ENCODE measurements at regions of chrX and their contacts with region 1.

Region 1: DNA sequence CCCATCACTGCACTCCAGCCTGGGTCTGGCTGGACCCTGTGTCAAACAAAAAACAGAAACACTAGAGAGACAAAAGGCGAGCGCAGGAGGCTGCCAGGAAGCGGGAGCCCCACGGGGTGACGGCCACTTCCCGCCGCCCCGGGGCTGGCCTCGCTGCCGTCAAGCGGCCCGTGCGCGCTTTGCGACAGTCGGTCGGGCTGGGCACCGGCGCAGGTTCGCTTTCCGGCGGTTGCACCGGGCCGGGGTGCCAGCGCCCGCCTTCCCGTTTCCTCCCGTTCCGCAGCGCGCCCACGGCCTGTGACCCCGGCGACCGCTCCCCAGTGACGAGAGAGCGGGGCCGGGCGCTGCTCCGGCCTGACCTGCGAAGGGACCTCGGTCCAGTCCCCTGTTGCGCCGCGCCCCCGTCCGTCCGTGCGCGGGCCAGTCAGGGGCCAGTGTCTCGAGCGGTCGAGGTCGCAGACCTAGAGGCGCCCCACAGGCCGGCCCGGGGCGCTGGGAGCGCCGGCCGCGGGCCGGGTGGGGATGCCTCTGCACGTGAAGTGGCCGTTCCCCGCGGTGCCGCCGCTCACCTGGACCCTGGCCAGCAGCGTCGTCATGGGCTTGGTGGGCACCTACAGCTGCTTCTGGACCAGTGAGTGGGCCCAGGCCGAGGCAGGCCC is at the start of gene TAFAZZIN:
- DNase-seq: peak; percentile 84
- H3K4me3 ChIP-seq: peak within 1 kb of the TSS; percentile 61 to 95 (median 77)
- H3K27ac ChIP-seq: peak within 1 kb of the TSS; percentile 91 to 98 (median 96)
- H3K4me1 ChIP-seq: peaks cover 0 to 23% (median 8%) of the 10 kb centered on the region in 4 donors
- H3K27me3 ChIP-seq: no peaks in the 10 kb centered on the region
- CTCF ChIP-seq: no peak
- EP300 ChIP-seq: no peak
- POLR2A ChIP-seq: peak; percentile 67
- total RNA-seq, gene TAFAZZIN: 46.7 to 495 (median 101) TPM

Region 2: DNA sequence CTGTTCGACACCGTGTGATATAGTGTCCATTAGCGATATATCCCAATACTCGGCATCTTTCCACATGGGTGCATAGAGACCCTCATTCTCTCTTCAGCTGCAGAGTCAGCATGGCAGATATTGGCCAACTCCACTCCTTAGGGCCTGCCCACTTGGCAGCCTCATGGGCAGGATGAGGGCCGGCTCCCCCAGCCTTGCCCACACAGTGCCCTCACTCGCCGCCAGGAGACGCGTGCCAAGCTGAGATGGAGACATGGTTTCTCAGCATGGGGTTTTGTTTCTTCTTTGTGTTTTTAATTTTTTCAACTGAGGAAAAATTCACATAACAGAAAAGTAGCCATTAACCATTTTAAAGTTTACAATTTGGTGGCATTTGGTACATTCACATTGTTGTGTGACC is 41.4 kb after region 1 on chrX:
- in situ Hi-C with region 1: no loop called
- intact Hi-C with region 1: loop called (anchors 5 kb)
- DNase-seq: no peak
- H3K4me3 ChIP-seq: no peak overlapping the region
- H3K27ac ChIP-seq: no peak overlapping the region
- H3K4me1 ChIP-seq: no peaks in the 10 kb centered on the region
- H3K27me3 ChIP-seq: no peaks in the 10 kb centered on the region
- CTCF ChIP-seq: no peak
- EP300 ChIP-seq: no peak
- POLR2A ChIP-seq: no peak